ENCODE measurements at regions of chr10 and their contacts with region 1.

Region 1: DNA sequence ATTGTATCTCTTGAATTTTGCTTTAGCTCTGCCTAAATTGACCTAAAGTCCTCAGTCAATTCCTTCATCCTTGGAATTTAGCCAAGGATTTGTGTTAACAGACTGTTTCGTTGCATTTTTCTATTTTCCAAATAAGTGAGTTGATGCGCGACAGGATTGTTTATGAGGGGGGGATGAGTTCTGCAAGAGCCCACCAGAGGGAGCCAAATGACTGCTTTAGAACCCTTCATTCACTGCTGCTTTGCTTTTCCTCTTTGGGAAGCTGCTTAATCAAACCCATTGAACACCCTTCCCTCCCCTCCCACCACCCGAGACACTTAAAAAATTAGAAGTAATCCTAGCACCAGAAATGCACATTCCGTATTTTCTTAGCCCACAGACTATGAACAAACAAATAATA is 33.7 kb upstream of the PTF1A start:
- DNase-seq: peak; percentile 58
- ATAC-seq: peak; percentile 57
- H3K4me3 Mint-ChIP-seq: no peak overlapping the region
- H3K27ac Mint-ChIP-seq: no peak overlapping the region
- H3K4me1 Mint-ChIP-seq: peaks cover 6% of the 10 kb centered on the region
- H3K27me3 Mint-ChIP-seq: peaks cover 32% of the 10 kb centered on the region

Region 2: GRCh38 chr10:22801785-22802184 is 356.6 kb before region 1 on chr10:
- CTCF ChIA-PET with region 1: no interaction called
- POLR2A ChIA-PET with region 1: no interaction called
- intact Hi-C with region 1: no loop called
- DNase-seq: no peak
- ATAC-seq: no peak
- H3K4me3 Mint-ChIP-seq: no peak overlapping the region
- H3K27ac Mint-ChIP-seq: no peak overlapping the region
- H3K4me1 Mint-ChIP-seq: no peaks in the 10 kb centered on the region
- H3K27me3 Mint-ChIP-seq: no peaks in the 10 kb centered on the region

Region 3: GRCh38 chr10:23171223-23171876 is 13.0 kb after region 1 on chr10:
- CTCF ChIA-PET with region 1: interaction called, 12 read pairs
- POLR2A ChIA-PET with region 1: no interaction called
- intact Hi-C with region 1: no loop called
- DNase-seq: peak; percentile 35
- ATAC-seq: no peak
- H3K4me3 Mint-ChIP-seq: no peak overlapping the region
- H3K27ac Mint-ChIP-seq: no peak overlapping the region
- H3K4me1 Mint-ChIP-seq: peaks cover 3% of the 10 kb centered on the region
- H3K27me3 Mint-ChIP-seq: peaks cover 48% of the 10 kb centered on the region

Region 4: GRCh38 chr10:23192737-23193434 is 34.5 kb after region 1 on chr10:
- CTCF ChIA-PET with region 1: no interaction called
- POLR2A ChIA-PET with region 1: no interaction called
- intact Hi-C with region 1: no loop called
- DNase-seq: peak; percentile 38
- ATAC-seq: no peak
- H3K4me3 Mint-ChIP-seq: no peak overlapping the region
- H3K27ac Mint-ChIP-seq: no peak overlapping the region
- H3K4me1 Mint-ChIP-seq: peaks cover 9% of the 10 kb centered on the region
- H3K27me3 Mint-ChIP-seq: peaks cover 56% of the 10 kb centered on the region

Region 5: DNA sequence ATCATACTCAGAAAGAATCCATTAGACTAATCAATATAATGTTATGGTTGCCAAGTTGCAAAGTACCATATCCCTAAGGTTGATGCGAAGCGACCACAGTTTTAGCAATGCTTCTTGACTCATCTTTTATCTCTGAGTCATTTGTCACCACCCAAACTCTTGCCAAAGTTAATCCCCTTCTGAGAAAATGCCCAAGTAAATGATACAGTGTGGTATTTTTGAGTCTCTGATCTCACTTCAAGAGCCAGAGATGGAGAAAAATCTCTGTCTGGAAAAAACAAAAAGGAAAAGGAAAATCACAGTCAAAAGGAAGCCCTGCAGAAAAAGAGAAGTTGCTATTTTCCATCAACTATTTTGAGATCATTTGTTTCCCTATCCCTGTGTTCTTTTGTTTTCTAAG is 253.9 kb after region 1 on chr10:
- CTCF ChIA-PET with region 1: no interaction called
- POLR2A ChIA-PET with region 1: no interaction called
- intact Hi-C with region 1: no loop called
- DNase-seq: peak; percentile 25
- ATAC-seq: peak; percentile 93
- H3K4me3 Mint-ChIP-seq: peak overlapping the region; percentile 9
- H3K27ac Mint-ChIP-seq: peak overlapping the region; percentile 37
- H3K4me1 Mint-ChIP-seq: peaks cover 23% of the 10 kb centered on the region
- H3K27me3 Mint-ChIP-seq: peaks cover 2% of the 10 kb centered on the region

Region 6: DNA sequence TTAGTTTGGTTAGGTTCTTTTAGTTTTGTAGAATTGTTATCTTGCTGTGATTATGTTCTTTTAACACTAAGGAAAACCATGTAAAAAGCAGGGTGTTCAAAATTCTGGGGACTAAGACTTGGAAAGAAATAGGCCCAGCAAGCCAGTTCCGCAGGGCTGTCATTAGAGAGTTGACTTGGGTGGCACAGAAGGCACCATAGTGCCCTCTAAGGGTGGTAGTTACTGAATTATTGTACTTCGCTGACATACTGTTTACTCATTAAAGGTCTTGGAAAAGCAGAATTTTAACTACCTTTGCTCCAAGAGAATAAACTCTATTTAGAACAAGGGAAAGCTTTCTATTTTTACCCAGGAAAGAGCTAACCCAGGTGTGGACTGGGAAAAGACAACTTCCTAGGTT is 367.0 kb after region 1 on chr10:
- CTCF ChIA-PET with region 1: interaction called, 3 read pairs
- POLR2A ChIA-PET with region 1: no interaction called
- intact Hi-C with region 1: loop called in 1 of 2 experiments (anchors 5 kb)
- DNase-seq: peak; percentile 26
- ATAC-seq: peak; percentile 47
- H3K4me3 Mint-ChIP-seq: no peak overlapping the region
- H3K27ac Mint-ChIP-seq: no peak overlapping the region
- H3K4me1 Mint-ChIP-seq: peaks cover 3% of the 10 kb centered on the region
- H3K27me3 Mint-ChIP-seq: peaks cover 5% of the 10 kb centered on the region

Region 7: DNA sequence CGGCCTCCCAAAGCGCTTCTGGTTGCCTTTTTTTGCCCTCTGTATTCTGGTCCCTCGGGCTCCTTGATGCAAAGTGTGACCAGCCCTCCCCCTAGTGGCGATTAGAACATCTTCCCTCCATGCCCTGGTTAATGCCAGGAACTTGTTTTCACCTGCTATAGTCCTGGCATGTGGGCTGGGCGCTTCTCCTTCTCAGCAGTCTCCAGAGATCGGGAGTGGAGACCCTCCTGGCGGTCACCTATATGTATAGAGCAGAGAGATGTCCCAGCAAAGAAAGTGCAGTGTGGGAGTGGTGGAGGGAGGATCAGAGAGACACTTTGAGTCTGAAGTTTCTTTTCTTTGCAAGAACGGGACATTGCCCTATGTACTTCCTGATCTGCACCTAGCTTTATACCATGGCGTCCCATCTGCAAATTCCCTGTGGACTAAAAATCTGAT is 544.6 kb after region 1 on chr10:
- CTCF ChIA-PET with region 1: no interaction called
- POLR2A ChIA-PET with region 1: no interaction called
- intact Hi-C with region 1: loop called (anchors 1 kb)
- DNase-seq: peak; percentile 75
- ATAC-seq: peak; percentile 90
- H3K4me3 Mint-ChIP-seq: no peak overlapping the region
- H3K27ac Mint-ChIP-seq: no peak overlapping the region
- H3K4me1 Mint-ChIP-seq: peaks cover 4% of the 10 kb centered on the region
- H3K27me3 Mint-ChIP-seq: peaks cover 25% of the 10 kb centered on the region

Region 8: DNA sequence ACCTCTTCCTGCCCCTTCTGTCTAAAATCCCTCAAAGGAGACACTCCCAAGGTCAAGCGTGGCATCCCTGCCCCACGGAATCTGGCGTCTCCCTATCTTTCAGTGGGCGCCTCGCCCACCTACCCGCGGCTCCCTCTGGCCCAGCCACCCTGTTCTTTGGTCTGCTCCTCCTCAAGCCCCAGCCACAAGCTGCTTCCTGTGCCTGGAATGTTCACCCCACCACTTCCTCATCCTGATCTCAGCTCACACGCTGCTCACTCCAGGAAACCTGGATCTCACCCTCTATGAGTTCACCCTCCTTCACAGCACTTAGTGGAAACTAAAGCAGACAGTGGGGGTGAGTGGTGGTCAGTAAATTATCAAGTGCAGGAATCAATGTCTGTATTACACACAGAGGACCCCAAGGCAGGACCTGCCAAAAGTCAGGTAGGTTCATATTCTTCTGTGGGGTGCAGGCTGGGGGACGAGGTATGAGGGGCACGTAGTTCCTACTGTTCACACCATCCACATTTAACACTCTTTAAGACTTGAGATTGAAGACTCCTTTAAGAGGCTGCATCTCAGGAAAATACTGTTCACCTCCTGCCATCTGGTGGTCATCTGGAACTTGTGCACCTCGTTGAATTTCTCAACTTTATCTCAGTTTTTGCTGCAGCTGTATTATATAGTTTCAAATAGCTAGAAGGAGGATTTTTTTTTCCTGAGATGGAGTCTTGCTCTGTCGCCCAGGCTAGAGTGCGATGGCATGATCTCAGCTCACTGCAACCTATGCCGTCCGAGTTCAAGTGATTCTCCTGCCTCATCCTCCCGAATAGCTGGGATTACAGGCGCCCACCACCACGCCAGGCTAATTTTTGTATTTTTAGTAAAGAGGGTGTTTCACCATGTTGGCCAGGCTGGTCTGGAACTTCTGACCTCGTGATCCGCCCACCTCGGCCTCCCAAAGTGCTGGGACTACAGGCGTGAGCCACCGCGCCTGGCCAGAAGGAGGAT is 1398.7 kb after region 1 on chr10:
- CTCF ChIA-PET with region 1: interaction called, 3 read pairs
- POLR2A ChIA-PET with region 1: no interaction called
- intact Hi-C with region 1: loop called in 1 of 2 experiments (anchors 5 kb)
- DNase-seq: peak; percentile 56
- ATAC-seq: peak; percentile 83
- H3K4me3 Mint-ChIP-seq: no peak overlapping the region
- H3K27ac Mint-ChIP-seq: no peak overlapping the region
- H3K4me1 Mint-ChIP-seq: peaks cover 4% of the 10 kb centered on the region
- H3K27me3 Mint-ChIP-seq: peaks cover 2% of the 10 kb centered on the region